ENCODE measurements at regions of chr3 and their contacts with region 1.

Region 1: DNA sequence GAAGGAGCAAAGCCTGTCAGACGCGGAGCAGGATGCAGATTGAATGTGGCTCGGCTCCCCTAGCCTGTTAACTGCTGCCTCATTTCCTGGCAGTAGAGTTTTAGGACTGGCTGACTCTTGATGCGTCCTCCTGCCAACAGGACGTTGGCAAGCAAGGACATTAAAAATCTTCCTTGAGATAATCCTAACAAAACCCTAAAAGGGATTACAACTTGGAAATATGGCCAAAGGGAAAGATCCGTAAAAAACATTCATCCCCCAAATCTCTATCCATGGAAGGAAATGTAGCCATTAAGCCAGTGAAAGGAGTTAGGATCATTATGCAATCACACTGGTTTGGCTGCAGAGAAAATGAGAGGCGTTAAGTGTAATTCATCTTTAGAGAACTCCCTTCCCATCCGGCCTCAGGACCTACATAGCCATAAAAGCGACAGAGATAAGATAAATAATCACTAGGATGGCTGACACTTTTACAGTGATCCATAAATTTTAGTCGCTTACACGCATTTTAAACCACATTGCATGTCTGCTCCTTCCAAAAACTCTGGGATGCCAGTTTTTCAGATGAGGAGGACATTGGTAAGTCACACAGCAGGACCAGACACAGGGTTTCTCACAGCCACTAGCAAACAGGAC is 44.5 kb upstream of the C3orf80 start:
- DNase-seq: peak; percentile 76 to 97 (median 94)
- H3K4me3 ChIP-seq: peak overlapping the region in 4 of 7 experiments; percentile 26 to 68 (median 46)
- H3K27ac ChIP-seq: peak overlapping the region; percentile 67 to 80
- H3K4me1 ChIP-seq: peaks cover 31 to 63% (median 47%) of the 10 kb centered on the region in 4 experiments
- H3K27me3 ChIP-seq: no peaks in the 10 kb centered on the region

Region 2: GRCh38 chr3:160170409-160171370 is 10.0 kb before region 1 on chr3:
- CTCF ChIA-PET with region 1: interaction called, 10 read pairs
- POLR2A ChIA-PET with region 1: no interaction called
- DNase-seq: peak in 2 of 3 donors; percentile 67 to 75
- H3K4me3 ChIP-seq: no peak overlapping the region
- H3K27ac ChIP-seq: no peak overlapping the region
- H3K4me1 ChIP-seq: peaks cover 9 to 58% (median 38%) of the 10 kb centered on the region in 4 experiments
- H3K27me3 ChIP-seq: no peaks in the 10 kb centered on the region

Region 3: GRCh38 chr3:160200353-160200752 is 19.7 kb after region 1 on chr3:
- CTCF ChIA-PET with region 1: interaction called, 11 read pairs
- POLR2A ChIA-PET with region 1: no interaction called
- DNase-seq: peak in 2 of 3 donors; percentile 47 to 54
- H3K4me3 ChIP-seq: no peak overlapping the region
- H3K27ac ChIP-seq: no peak overlapping the region
- H3K4me1 ChIP-seq: no peaks in the 10 kb centered on the region
- H3K27me3 ChIP-seq: no peaks in the 10 kb centered on the region

Region 4: DNA sequence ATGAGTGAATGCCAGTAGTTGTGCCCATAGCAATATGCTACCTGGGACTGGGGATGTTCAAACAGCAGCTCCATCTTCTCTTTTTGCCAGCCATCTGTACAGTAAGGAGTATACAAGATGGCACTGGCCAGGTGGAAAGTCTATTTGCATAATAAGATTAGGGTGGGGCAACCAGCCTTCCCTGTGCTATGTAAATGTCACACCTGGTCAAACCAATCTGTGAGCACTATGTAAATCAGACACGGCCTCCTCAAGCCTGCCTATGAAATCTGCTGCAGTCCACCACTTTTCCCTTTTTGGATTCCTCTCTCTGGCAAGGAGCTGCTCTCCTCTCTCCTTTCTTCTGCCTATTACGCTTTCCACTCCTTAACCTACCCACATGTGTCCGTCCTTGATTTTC is 97.5 kb after region 1 on chr3:
- CTCF ChIA-PET with region 1: no interaction called
- POLR2A ChIA-PET with region 1: no interaction called
- DNase-seq: no peak
- H3K4me3 ChIP-seq: no peak overlapping the region
- H3K27ac ChIP-seq: no peak overlapping the region
- H3K4me1 ChIP-seq: no peaks in the 10 kb centered on the region
- H3K27me3 ChIP-seq: no peaks in the 10 kb centered on the region

Measured in common myeloid progenitor, CD34-positive (primary cell).